Motor neuron (in vitro differentiated cells): ENCODE measurements at regions of chr12 and their contacts with region 1.

Region 1: DNA sequence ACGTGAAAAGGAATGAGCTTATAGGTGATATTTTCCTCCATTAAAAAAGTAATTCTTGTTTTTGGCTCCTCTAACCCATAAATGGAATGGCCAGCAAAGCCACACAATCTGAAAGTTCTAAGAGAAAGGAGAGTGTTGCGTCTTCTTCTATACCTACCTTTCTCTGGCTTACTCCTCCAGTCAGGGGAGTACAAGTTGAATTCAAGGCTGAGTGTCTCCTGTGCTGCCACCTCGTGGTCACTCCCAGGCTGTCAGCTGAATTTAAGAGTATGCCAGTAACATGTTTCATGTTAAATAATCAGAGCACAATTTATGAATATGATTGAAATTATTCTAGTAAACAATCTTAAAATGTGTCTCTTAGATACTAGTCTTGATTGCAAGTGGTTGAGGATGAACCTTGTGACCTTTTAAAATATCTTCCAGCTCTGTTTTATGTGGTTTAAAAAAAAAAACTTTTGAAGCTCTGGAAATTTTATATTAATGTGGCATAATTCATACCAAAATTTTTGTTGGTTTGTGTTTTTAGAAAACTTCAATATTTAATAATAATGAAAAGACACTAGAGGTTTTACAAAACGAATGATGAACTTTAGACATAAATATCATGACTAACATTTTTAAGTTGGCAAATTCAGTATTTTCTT is 31.7 kb downstream of the PTHLH start:
- ATAC-seq: peak in 5 of 8 experiments; percentile 48 to 87 (median 71)
- H3K4me3 ChIP-seq: no peak overlapping the region
- H3K27ac ChIP-seq: no peak overlapping the region
- H3K4me1 ChIP-seq: no peaks in the 10 kb centered on the region

Region 2: DNA sequence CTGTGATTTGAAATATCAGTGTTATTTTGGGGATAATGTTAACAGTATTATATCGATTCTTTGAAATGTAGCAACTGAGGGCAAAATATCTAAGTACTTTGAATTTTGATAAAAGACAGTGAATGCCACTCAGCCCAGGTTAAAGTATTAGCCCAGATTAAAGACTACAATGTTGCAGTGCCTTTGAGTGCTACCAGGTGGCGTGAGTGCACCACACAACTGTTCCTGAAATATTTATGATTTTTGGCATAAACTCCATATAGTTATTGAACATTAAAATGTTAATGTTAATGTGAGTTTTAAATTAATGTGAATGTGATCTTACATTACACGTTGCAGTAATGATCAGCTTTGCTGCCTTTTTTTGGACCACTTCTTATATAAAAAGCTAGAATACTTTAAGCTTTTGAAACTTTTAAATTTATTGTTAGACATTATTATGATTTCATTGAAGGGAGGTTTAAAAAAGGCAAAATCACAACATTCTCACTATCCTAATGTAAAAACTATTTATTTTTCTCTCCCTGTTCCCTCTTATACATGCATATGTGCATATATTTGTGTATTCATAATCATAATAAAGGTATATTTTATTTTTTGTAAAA is 207.7 kb before region 1 on chr12:
- in situ Hi-C with region 1: loop called in 1 of 9 experiments (anchors 25 kb)
- ATAC-seq: peak in 2 of 8 experiments; percentile 34 to 57
- H3K4me3 ChIP-seq: no peak overlapping the region
- H3K27ac ChIP-seq: no peak overlapping the region
- H3K4me1 ChIP-seq: no peaks in the 10 kb centered on the region

Region 3: DNA sequence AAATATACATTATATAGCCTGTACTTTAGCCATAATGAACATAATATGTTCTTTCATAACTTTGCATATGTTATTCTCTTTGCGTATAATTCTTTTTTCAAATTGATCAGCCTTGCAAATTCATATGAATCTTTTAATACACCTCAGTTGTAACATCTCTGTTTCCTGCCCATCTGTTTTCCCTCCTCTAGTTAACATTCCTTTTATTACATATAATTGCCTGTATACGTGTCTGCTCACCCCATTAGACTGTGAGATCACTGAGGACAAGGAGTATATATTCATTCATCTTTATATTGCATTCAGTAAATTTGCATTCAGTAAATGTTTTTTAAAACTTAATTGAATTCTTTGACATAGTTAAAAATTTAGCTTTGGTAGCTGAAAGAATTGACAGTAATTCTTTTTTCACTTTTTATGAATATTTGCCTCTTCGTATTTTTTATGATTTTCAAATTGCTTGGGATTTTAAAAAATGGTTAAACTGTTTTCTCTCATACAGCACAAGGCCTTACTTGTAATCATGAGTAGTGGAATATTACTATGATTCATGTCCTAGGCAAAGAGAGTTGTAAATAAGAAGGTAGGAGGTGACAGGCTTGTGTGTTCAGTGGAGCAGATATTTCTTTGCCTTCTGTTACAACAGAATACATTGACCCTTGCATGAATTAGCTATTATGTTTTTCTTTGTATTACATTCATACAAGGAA is 193.6 kb before region 1 on chr12:
- in situ Hi-C with region 1: loop called in 2 of 9 experiments (anchors 10 to 25 kb)
- ATAC-seq: peak in 2 of 8 experiments; percentile 77 to 78
- H3K4me3 ChIP-seq: no peak overlapping the region
- H3K27ac ChIP-seq: no peak overlapping the region
- H3K4me1 ChIP-seq: no peaks in the 10 kb centered on the region